ENCODE measurements at regions of chr7 and their contacts with region 1.

Region 1: DNA sequence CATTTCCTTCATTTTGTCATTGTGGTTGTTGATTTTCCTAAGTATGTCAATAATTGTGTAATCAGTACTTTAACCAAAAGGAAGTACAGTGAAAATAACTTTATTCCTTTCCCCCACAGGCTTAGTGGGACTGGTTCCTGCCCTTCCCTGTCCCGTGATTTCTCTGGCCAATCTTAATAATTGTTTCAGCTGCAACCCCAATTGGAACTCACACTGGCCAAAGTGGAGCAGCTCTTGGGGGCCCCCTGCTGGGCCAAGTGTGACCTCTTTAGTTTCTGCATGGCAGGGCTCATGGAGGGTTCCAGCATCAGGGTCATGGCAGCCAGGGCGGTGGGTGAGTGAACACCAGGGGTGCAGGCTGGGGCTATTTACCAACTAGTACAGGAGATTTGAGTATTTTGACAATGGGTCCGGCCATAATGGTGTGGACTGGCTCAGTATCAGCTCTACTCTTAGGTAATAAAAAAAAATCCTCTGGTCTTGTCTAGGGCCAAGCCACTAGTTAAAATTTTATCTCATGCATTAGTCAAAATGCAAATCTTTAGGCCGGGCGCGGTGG is 31.7 kb downstream of the CYCS start:
- DNase-seq: peak; percentile 90
- ATAC-seq: peak; percentile 89
- H3K4me3 ChIP-seq: no peak overlapping the region
- H3K27ac ChIP-seq: no peak overlapping the region
- H3K4me1 ChIP-seq: peaks cover 4% of the 10 kb centered on the region; the same call in 1 of the 2 replicates
- H3K27me3 ChIP-seq: no peaks in the 10 kb centered on the region
- CTCF ChIP-seq: peak; percentile 91

Region 2: GRCh38 chr7:24812310-24812945 is 280.9 kb before region 1 on chr7:
- CTCF ChIA-PET with region 1: interaction called, 38 read pairs
- POLR2A ChIA-PET with region 1: no interaction called
- intact Hi-C with region 1: loop called (anchors 1 kb)
- DNase-seq: peak; percentile 67
- ATAC-seq: peak; percentile 93
- H3K4me3 ChIP-seq: no peak overlapping the region
- H3K27ac ChIP-seq: no peak overlapping the region
- H3K4me1 ChIP-seq: no peaks in the 10 kb centered on the region
- H3K27me3 ChIP-seq: no peaks in the 10 kb centered on the region
- CTCF ChIP-seq: peak; percentile 90

Region 3: DNA sequence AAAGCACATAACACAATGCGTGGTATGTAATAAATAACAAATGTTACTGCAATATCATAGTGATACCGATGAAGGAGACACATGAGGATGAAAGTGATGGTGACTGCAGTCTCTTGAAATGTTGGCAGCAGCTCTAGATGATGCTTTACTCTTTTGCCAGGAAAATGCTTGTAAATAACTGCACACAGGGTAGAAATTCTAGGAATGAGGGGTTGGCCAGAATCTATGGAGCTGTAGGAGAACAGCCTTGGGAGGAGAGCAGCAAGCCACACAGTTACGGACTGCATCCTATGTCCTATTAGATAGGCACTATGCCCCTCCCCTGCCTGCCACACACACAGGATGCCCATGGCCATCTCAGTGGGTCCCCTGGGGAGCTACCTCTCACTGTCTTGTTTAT is 238.5 kb before region 1 on chr7:
- CTCF ChIA-PET with region 1: no interaction called
- POLR2A ChIA-PET with region 1: no interaction called
- intact Hi-C with region 1: no loop called
- DNase-seq: no peak
- ATAC-seq: peak; percentile 35; the same call in 1 of the 2 replicates
- H3K4me3 ChIP-seq: no peak overlapping the region
- H3K27ac ChIP-seq: no peak overlapping the region
- H3K4me1 ChIP-seq: peaks cover 11% of the 10 kb centered on the region
- H3K27me3 ChIP-seq: no peaks in the 10 kb centered on the region
- CTCF ChIP-seq: no peak

Measured in PC-3 (cell line).